Activated T-helper 1 cell treated with anti-CD3 and anti-CD28 coated beads, Interleukin-12 subunit alpha, Interleukin-12 subunit beta, Interleukin-2, Interleukin-4 antibody, amounts not matched to agents 30 ng/mL and 10 ng/mL and 1 ng/mL, durations not matched to agents 14 hours and 24 hours and 36 hours (primary cell): ENCODE measurements at regions of chr10 and their contacts with region 1.

Region 1: DNA sequence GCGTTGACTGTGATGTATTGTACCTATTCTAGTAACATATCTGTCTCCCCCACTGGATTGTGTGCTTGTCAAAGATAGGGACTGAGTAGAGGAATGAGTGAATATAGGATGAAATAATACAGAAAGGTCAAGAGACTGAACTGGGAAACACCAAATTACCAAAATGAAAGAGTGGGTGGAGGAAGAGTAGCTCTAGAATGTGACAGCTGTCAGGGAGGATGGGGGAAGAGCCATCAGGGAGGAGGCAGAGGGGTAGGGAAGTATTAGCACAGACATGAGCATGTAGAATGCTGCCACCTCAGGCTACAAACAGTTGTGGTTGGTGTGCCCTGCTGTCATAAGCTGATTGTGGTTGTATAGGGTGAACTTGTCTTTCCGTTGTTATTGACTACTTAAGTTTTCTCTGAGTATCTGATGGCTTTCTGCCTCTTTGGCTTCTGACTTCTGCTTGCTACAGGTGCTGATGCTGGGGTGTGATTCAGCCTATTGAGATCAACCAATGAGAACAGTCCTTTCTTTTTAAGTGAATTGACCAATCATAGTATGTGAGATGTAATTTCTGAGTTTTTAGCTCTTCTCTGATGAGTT is 5.6 kb downstream of the CCSER2 start:
- DNase-seq: peak; percentile 54
- H3K4me3 Mint-ChIP-seq: peak overlapping the region; percentile 54
- H3K27ac Mint-ChIP-seq: peak overlapping the region; percentile 90
- H3K4me1 Mint-ChIP-seq: peaks cover 52% of the 10 kb centered on the region
- H3K27me3 Mint-ChIP-seq: no peaks in the 10 kb centered on the region

Region 2: GRCh38 chr10:84139126-84140035 is 194.6 kb before region 1 on chr10 and contains the start of gene GHITM:
- intact Hi-C with region 1: loop called (anchors 1 kb)
- DNase-seq: peak; percentile 99
- H3K4me3 Mint-ChIP-seq: peak within 1 kb of the TSS; percentile 92
- H3K27ac Mint-ChIP-seq: peak within 1 kb of the TSS; percentile 88
- H3K4me1 Mint-ChIP-seq: peaks cover 27% of the 10 kb centered on the region
- H3K27me3 Mint-ChIP-seq: no peaks in the 10 kb centered on the region
- total RNA-seq, gene GHITM: 140 and 142 TPM in 2 replicates

Region 3: DNA sequence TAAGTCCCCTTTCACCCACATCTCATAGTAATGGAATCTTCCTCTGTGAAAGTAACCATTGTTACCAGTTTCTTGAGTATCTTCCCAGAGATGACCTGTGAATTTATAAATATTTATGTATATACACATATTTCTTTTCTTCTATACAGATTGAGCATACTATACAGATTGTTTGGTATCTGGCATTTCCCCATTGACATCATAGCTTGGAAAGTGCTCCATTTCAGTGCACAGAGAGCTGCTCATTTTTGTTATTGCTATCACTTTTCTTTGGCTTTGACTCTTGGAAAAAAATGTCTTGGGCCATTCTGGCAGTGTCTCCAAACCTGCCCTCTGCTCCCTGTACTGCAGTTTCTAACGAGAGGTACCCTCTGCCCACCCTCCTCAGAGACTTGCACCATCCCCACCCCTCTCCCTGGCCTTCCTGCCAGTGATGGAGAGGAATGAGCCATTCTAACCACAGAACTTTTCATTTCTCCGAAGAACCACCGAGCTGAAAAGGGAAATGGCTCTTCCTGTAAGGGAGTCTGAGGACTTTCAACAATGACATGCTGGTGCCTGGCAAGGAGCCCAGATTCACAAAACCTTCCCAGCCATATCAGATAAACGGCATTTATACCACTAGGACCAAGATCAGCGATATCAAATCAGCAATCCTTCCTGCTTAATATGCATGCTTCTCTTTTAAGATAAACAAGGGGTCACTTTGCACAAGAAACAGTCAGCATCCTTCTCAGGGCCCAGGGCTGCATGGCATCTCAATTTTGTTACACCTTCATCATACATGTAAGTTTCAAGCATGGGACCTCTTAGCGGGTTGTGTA is 25.3 kb before region 1 on chr10:
- intact Hi-C with region 1: loop called (anchors 1 kb)
- DNase-seq: peak; percentile 37
- H3K4me3 Mint-ChIP-seq: peak overlapping the region; percentile 65
- H3K27ac Mint-ChIP-seq: peak overlapping the region; percentile 77
- H3K4me1 Mint-ChIP-seq: peaks cover 52% of the 10 kb centered on the region
- H3K27me3 Mint-ChIP-seq: peaks cover 1% of the 10 kb centered on the region

Region 4: DNA sequence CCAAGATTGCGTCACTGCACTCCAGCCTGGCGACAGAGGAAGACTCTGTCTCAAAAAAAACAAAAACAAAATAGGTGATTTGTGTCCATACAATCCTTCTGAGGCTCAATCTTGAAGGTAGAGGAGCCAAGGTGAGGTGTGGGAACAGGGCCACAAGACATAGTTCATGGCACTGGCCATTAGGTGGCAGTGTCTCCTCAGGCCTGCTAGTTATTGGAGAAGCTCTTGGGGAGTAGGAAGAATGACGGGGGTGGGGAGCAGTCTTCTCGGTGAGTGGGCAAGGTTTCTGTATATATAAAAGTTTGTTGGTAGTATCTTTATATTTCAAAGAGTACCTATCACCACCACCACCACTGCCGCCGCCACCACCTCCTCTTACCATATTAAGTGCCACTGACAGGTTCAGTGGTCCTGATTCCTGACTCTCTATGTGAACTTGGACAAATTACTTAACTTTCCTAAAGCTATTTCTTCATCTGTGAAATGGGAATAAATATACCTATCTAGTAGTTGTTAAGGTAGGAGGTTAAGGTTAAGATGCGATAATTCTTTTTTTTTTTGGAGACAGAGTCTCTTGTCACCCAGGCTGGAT is 18.4 kb after region 1 on chr10:
- intact Hi-C with region 1: loop called (anchors 2 kb)
- DNase-seq: peak; percentile 49
- H3K4me3 Mint-ChIP-seq: no peak overlapping the region
- H3K27ac Mint-ChIP-seq: no peak overlapping the region
- H3K4me1 Mint-ChIP-seq: peaks cover 65% of the 10 kb centered on the region
- H3K27me3 Mint-ChIP-seq: no peaks in the 10 kb centered on the region